Caco-2 (cell line): ENCODE measurements at regions of chr1 and their contacts with region 1.

Region 1: DNA sequence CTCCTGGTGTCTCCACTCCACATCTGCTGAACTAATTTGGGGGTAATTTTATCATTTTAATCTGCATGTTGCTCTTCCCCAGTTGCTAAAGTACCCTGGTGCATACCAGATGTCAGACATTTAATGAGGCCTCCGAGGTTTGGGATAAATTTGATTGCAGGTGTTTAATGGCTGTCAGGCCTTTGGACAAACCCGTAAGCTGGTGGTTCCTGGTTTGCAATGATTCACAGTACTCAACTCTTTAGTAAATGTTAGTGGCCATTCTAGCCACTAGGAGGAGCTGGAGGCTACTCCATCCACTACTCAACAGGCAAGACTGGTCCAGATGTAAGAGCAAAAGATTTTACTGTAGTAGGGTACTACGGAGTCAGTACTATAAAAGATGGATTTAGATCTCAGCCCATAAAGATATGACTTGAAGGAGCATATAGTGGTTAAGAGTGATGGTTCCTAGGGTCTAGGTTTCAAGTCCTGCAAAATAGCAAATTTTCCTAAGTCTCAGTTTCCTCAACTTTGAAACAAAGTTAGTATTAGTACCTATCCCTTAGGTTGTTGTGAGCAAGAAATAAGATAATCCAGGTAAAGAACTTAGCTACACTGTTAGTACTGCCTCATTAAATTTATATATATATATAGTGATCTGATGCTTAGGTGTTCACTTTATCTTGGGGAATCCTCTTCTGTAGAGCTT is 132.8 kb downstream of the SNX7 start:
- DNase-seq: peak in 1 of 2 experiments; percentile 32
- H3K4me3 ChIP-seq: no peak overlapping the region
- H3K4me3 Mint-ChIP-seq: no peak overlapping the region
- H3K27ac Mint-ChIP-seq: no peak overlapping the region
- H3K4me1 ChIP-seq: no peaks in the 10 kb centered on the region
- H3K4me1 Mint-ChIP-seq: no peaks in the 10 kb centered on the region
- H3K27me3 ChIP-seq: no peaks in the 10 kb centered on the region
- H3K27me3 Mint-ChIP-seq: no peaks in the 10 kb centered on the region
- CTCF ChIP-seq: peak; percentile 50 to 65

Region 2: GRCh38 chr1:98706173-98706843 is 88.0 kb before region 1 on chr1:
- CTCF ChIA-PET with region 1: no interaction called
- POLR2A ChIA-PET with region 1: no interaction called
- intact Hi-C with region 1: no loop called
- DNase-seq: no peak
- H3K4me3 ChIP-seq: no peak overlapping the region
- H3K4me3 Mint-ChIP-seq: no peak overlapping the region
- H3K27ac Mint-ChIP-seq: no peak overlapping the region
- H3K4me1 ChIP-seq: no peaks in the 10 kb centered on the region
- H3K4me1 Mint-ChIP-seq: peaks cover 6% of the 10 kb centered on the region
- H3K27me3 ChIP-seq: no peaks in the 10 kb centered on the region
- H3K27me3 Mint-ChIP-seq: no peaks in the 10 kb centered on the region
- CTCF ChIP-seq: no peak

Region 3: DNA sequence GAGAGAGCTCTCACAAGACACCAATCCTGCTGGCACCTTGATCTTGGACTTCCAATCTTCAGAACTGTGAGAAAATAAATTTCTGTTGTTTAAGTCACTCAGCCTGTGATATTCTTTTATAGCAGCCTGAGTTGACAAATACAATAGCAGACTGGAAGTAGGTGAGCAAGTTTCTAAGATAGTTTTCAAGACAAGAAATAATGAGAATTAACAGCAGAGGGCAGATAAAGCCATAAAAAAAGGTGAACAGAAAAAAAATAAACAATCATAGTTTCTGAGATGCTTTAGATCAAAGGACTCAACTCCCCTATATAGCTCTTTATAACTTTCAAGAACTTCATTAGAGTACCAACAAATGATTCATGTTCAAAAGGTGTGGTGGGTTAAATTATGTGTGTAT is 90.5 kb after region 1 on chr1:
- CTCF ChIA-PET with region 1: no interaction called
- POLR2A ChIA-PET with region 1: no interaction called
- intact Hi-C with region 1: loop called (anchors 5 kb)
- DNase-seq: no peak
- H3K4me3 ChIP-seq: no peak overlapping the region
- H3K4me3 Mint-ChIP-seq: no peak overlapping the region
- H3K27ac Mint-ChIP-seq: no peak overlapping the region
- H3K4me1 ChIP-seq: no peaks in the 10 kb centered on the region
- H3K4me1 Mint-ChIP-seq: no peaks in the 10 kb centered on the region
- H3K27me3 ChIP-seq: no peaks in the 10 kb centered on the region
- H3K27me3 Mint-ChIP-seq: peaks cover 5% of the 10 kb centered on the region
- CTCF ChIP-seq: no peak

Region 4: DNA sequence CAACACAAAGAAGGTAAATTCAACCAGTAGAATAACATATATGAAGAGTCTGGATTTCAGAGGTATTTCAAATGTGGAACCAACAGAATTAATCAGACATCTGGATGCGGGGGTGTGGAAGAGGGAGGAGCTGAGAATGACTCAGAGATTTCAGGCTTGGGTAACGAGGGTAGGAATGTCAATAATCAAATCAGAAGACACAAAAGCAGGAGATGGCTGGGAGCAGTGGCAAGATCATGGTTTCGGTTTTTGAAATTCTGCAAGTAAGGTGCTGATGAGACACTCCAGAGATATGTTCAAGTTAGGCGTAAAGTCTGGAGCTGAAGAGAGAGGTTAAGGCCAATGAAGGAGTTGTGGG is 146.4 kb after region 1 on chr1:
- CTCF ChIA-PET with region 1: interaction called, 6 read pairs
- POLR2A ChIA-PET with region 1: no interaction called
- intact Hi-C with region 1: loop called (anchors 5 kb)
- DNase-seq: no peak
- H3K4me3 ChIP-seq: no peak overlapping the region
- H3K4me3 Mint-ChIP-seq: no peak overlapping the region
- H3K27ac Mint-ChIP-seq: no peak overlapping the region
- H3K4me1 ChIP-seq: no peaks in the 10 kb centered on the region
- H3K4me1 Mint-ChIP-seq: no peaks in the 10 kb centered on the region
- H3K27me3 ChIP-seq: no peaks in the 10 kb centered on the region
- H3K27me3 Mint-ChIP-seq: no peaks in the 10 kb centered on the region
- CTCF ChIP-seq: no peak

Region 5: GRCh38 chr1:99170516-99170915 is 376.2 kb after region 1 on chr1:
- CTCF ChIA-PET with region 1: no interaction called
- POLR2A ChIA-PET with region 1: no interaction called
- intact Hi-C with region 1: loop called (anchors 10 kb)
- DNase-seq: no peak
- H3K4me3 ChIP-seq: no peak overlapping the region
- H3K4me3 Mint-ChIP-seq: peak overlapping the region; percentile 37
- H3K27ac Mint-ChIP-seq: no peak overlapping the region
- H3K4me1 ChIP-seq: peaks cover 9% of the 10 kb centered on the region; the same call in 1 of the 2 replicates
- H3K4me1 Mint-ChIP-seq: peaks cover 13% of the 10 kb centered on the region
- H3K27me3 ChIP-seq: no peaks in the 10 kb centered on the region
- H3K27me3 Mint-ChIP-seq: no peaks in the 10 kb centered on the region
- CTCF ChIP-seq: no peak